ENCODE measurements at regions of chr2 and their contacts with region 1.

Region 1: DNA sequence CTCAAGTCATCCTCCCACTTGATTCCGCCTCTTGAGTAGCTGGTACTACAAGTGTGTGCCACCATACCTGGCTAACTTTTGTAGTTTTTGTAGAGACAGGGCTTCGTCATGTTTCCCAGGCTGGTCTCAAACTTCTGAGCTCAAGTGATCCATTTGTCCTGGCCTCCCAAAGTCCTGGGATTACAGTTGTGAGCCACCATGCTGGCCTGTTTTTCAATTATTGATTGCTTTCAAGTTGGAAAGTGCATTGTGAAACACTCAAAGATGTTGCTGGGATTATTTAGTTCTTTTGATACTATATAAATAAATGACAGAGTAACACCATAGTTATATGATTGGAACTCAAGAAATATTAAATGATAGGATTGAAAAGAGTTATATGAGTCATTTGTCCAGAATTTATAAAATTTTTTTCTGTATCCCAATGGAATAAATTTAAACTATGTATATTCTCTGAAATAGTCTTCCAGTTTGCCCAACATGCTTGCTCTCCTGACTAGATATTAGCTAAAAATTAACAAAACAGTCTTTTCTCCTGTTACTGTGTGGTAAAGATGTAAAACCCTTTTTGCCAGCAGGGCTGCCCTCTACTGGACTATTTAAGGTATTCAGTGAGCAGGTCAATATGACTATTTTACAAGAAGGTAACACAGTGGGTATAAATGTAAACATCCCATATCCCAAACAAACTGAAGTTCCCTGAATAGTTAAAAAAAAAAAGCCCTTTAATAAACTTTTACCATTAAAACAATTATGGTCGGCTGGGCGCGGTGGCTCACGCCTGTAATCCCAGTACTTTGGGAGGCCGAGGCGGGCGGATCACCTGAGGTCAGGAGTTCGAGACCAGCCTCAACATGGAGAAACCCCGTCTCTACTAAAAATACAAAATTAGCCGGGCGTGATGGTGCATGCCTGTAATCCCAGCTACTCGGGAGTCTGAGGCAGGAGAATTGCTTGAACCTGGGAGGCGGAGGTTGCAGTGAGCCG is 42.7 kb downstream of the ACSL3 start:
- DNase-seq: no peak
- ATAC-seq: peak; percentile 95
- H3K4me3 ChIP-seq: no peak overlapping the region
- H3K27ac ChIP-seq: no peak overlapping the region
- H3K4me1 ChIP-seq: no peaks in the 10 kb centered on the region
- H3K27me3 ChIP-seq: no peaks in the 10 kb centered on the region
- CTCF ChIP-seq: peak; percentile 62 to 77 (median 66); a peak in 5 of 6 replicates
- EP300 ChIP-seq: no peak
- POLR2A ChIP-seq: no peak
- RAD21 ChIP-seq: peak; percentile 95

Region 2: DNA sequence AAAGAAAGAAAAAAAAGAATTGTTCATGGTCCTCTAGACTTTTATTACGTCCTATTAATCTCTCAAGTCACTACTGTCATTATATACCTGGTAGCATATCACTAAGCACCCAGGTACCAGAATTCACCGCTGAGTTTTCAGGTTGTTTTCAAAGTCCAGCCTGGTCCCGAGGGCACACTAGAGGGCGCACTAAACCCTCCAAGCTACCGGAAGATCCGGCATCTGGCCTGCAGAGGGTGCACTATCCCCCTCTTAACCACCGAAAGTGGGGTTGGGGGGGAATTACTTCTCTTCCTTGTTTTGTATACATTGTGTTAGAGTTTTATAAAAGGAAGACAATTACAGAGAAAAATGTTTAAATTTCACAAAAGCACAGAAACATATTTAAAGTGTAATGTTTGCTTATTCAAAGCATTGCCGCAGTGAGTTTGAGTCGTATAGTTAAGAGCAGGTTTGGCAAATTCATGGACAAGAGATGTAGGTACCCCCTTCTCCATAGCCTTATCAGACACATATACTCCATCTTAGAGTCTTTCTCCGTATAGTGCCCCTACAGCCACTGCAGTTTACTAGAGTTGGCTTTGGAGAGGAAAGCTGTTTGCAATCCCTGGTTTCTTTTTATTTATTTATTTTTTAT is 212.8 kb before region 1 on chr2:
- CTCF ChIA-PET with region 1: interaction called, 48 read pairs
- POLR2A ChIA-PET with region 1: no interaction called
- RAD21 ChIA-PET with region 1: interaction called, 3 read pairs
- SMC1A ChIA-PET with region 1: interaction called, 8 read pairs
- in situ Hi-C with region 1: loop called (anchors 5 kb)
- intact Hi-C with region 1: loop called (anchors 1 kb)
- DNase-seq: no peak
- ATAC-seq: peak; percentile 99
- H3K4me3 ChIP-seq: no peak overlapping the region
- H3K27ac ChIP-seq: no peak overlapping the region
- H3K4me1 ChIP-seq: no peaks in the 10 kb centered on the region
- H3K27me3 ChIP-seq: no peaks in the 10 kb centered on the region
- CTCF ChIP-seq: peak; percentile 99 to 100 (median 100); a peak in 5 of 6 replicates
- EP300 ChIP-seq: no peak
- POLR2A ChIP-seq: no peak
- RAD21 ChIP-seq: peak; percentile 93

Region 3: GRCh38 chr2:222715742-222716141 is 187.8 kb before region 1 on chr2:
- CTCF ChIA-PET with region 1: interaction called, 141 read pairs
- POLR2A ChIA-PET with region 1: interaction called, 3 read pairs
- RAD21 ChIA-PET with region 1: interaction called, 66 read pairs
- SMC1A ChIA-PET with region 1: interaction called, 100 read pairs
- in situ Hi-C with region 1: no loop called
- intact Hi-C with region 1: no loop called
- DNase-seq: no peak
- ATAC-seq: no peak
- H3K4me3 ChIP-seq: no peak overlapping the region
- H3K27ac ChIP-seq: no peak overlapping the region
- H3K4me1 ChIP-seq: no peaks in the 10 kb centered on the region; the same call in none of the 2 replicates
- H3K27me3 ChIP-seq: no peaks in the 10 kb centered on the region
- CTCF ChIP-seq: no peak
- EP300 ChIP-seq: no peak
- POLR2A ChIP-seq: no peak
- RAD21 ChIP-seq: no peak

Region 4: GRCh38 chr2:222797261-222797660 is 106.3 kb before region 1 on chr2:
- CTCF ChIA-PET with region 1: interaction called, 28 read pairs
- POLR2A ChIA-PET with region 1: no interaction called
- RAD21 ChIA-PET with region 1: interaction called, 17 read pairs
- SMC1A ChIA-PET with region 1: interaction called, 3 read pairs
- in situ Hi-C with region 1: no loop called
- intact Hi-C with region 1: loop called (anchors 2 kb)
- DNase-seq: no peak
- ATAC-seq: peak; percentile 70; the same call in 2 of the 3 replicates
- H3K4me3 ChIP-seq: no peak overlapping the region
- H3K27ac ChIP-seq: no peak overlapping the region
- H3K4me1 ChIP-seq: no peaks in the 10 kb centered on the region
- H3K27me3 ChIP-seq: no peaks in the 10 kb centered on the region
- CTCF ChIP-seq: peak; percentile 38 to 49 (median 49); a peak in 5 of 6 replicates
- EP300 ChIP-seq: no peak
- POLR2A ChIP-seq: no peak
- RAD21 ChIP-seq: peak; percentile 67

Region 5: DNA sequence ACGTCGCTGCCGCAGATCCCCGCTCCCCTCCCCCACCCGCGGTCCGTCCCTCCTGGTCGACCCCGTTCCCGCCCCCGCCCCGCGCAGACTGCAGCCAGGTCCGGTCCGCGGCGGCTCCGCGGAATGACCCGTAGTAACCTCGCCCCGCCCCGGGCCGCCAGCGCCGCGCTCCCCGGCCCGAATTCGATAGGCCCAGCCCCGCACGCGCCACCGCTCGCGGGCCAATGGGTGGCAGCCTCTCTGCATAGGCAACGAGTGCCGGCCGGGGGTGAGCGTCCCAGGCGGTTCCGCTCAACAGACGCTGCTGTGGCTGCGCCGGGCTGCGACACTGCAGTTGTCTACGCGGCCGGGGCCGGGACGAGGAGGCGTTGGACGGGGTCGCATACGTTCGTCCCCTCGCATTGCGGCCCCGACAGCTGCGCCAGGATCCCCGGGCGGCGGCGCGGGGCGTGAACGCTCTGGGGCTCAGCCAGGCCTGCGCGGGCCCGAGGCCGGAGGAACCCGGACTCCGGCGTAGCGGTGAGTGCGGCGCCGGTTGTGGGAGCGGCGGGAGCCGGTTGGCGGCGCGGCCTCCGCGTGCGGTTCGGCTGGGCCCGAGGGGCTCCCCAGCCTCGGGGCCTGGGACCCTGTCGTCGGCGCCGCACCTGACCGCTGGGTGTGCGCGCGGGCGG is 42.7 kb before region 1 on chr2 and contains the start of gene ACSL3:
- CTCF ChIA-PET with region 1: interaction called, 27 read pairs
- POLR2A ChIA-PET with region 1: no interaction called
- RAD21 ChIA-PET with region 1: interaction called, 6 read pairs
- SMC1A ChIA-PET with region 1: interaction called, 9 read pairs
- in situ Hi-C with region 1: no loop called
- intact Hi-C with region 1: no loop called
- DNase-seq: peak; percentile 66
- ATAC-seq: peak; percentile 98
- H3K4me3 ChIP-seq: peak within 1 kb of the TSS; percentile 67
- H3K27ac ChIP-seq: peak within 1 kb of the TSS; percentile 74
- H3K4me1 ChIP-seq: peaks cover 6% of the 10 kb centered on the region
- H3K27me3 ChIP-seq: no peaks in the 10 kb centered on the region
- CTCF ChIP-seq: no peak; a peak in 1 of 6 replicates
- EP300 ChIP-seq: no peak
- POLR2A ChIP-seq: peak; percentile 100
- RAD21 ChIP-seq: no peak
- polyA plus RNA-seq, gene ACSL3: 15.6 to 24.0 TPM

Region 6: GRCh38 chr2:222892321-222892720 is 11.2 kb before region 1 on chr2:
- CTCF ChIA-PET with region 1: interaction called, 26 read pairs
- POLR2A ChIA-PET with region 1: no interaction called
- RAD21 ChIA-PET with region 1: interaction called, 9 read pairs
- SMC1A ChIA-PET with region 1: interaction called, 11 read pairs
- in situ Hi-C with region 1: no loop called
- intact Hi-C with region 1: no loop called
- DNase-seq: no peak
- ATAC-seq: no peak
- H3K4me3 ChIP-seq: no peak overlapping the region
- H3K27ac ChIP-seq: no peak overlapping the region
- H3K4me1 ChIP-seq: no peaks in the 10 kb centered on the region
- H3K27me3 ChIP-seq: no peaks in the 10 kb centered on the region
- CTCF ChIP-seq: no peak
- EP300 ChIP-seq: no peak
- POLR2A ChIP-seq: no peak
- RAD21 ChIP-seq: no peak

Measured in GM12878 (cell line).